ENCODE measurements at regions of chr2 and their contacts with region 1.

Region 1: DNA sequence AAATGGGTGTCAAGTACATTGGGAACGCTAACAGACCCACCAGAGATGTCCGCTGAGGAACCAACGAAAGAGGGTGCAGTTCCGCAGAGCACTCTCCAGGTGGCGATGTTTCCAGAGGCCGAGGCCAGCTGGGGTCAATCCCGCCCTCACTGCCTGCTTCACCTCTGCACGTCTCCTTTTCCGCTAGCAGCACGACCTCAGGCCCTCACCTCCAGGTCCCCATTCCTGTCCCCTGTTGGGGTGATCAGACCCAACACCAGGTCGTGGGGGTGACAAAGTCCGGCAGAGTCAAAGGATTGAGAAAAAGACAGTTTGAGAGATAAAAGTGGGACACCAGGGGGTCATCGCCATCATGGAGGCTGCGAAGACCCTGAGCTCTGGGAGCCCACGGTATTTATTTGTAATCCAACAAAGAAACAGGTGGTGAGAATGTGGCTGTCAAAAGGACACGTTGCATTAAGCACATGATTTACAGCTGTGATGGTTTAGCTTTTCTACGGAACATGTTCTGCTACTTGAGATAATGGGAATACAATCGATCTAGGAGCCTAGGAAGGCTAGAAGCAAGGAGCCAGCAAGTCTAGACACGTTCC is 27.3 kb downstream of the ZAP70 start:
- DNase-seq: peak in 3 of 5 donors; percentile 28 to 56 (median 35)
- H3K4me3 ChIP-seq: no peak overlapping the region
- H3K4me3 Mint-ChIP-seq: peak overlapping the region in 3 of 7 donors; percentile 29 to 63 (median 62)
- H3K27ac ChIP-seq: peak overlapping the region; percentile 32
- H3K27ac Mint-ChIP-seq: peak overlapping the region; percentile 71 to 92 (median 82)
- H3K4me1 ChIP-seq: peaks cover 48% of the 10 kb centered on the region
- H3K4me1 Mint-ChIP-seq: peaks cover 62 to 76% (median 70%) of the 10 kb centered on the region in 3 donors
- H3K27me3 ChIP-seq: no peaks in the 10 kb centered on the region
- H3K27me3 Mint-ChIP-seq: peaks cover 0 to 3% of the 10 kb centered on the region in 2 donors

Region 2: GRCh38 chr2:97718051-97718882 is 22.4 kb before region 1 on chr2:
- CTCF ChIA-PET with region 1: interaction called, 301 read pairs
- POLR2A ChIA-PET with region 1: interaction called, 13 read pairs
- DNase-seq: peak; percentile 68 to 88 (median 78)
- H3K4me3 ChIP-seq: peak overlapping the region; percentile 91
- H3K4me3 Mint-ChIP-seq: peak overlapping the region; percentile 89 to 99 (median 93)
- H3K27ac ChIP-seq: peak overlapping the region; percentile 58
- H3K27ac Mint-ChIP-seq: peak overlapping the region; percentile 86 to 100 (median 98)
- H3K4me1 ChIP-seq: peaks cover 81% of the 10 kb centered on the region
- H3K4me1 Mint-ChIP-seq: peaks cover 79 to 93% (median 81%) of the 10 kb centered on the region in 3 donors
- H3K27me3 ChIP-seq: no peaks in the 10 kb centered on the region
- H3K27me3 Mint-ChIP-seq: peaks cover 0 to 4% of the 10 kb centered on the region in 2 donors

Region 3: GRCh38 chr2:97728091-97728731 is 12.5 kb before region 1 on chr2:
- CTCF ChIA-PET with region 1: interaction called, 20 read pairs
- POLR2A ChIA-PET with region 1: interaction called, 3 read pairs
- DNase-seq: no peak
- H3K4me3 ChIP-seq: no peak overlapping the region
- H3K4me3 Mint-ChIP-seq: peak overlapping the region; percentile 5 to 61 (median 49)
- H3K27ac ChIP-seq: no peak overlapping the region
- H3K27ac Mint-ChIP-seq: peak overlapping the region; percentile 76 to 96 (median 88)
- H3K4me1 ChIP-seq: peaks cover 51% of the 10 kb centered on the region
- H3K4me1 Mint-ChIP-seq: peaks cover 71 to 93% (median 76%) of the 10 kb centered on the region in 3 donors
- H3K27me3 ChIP-seq: no peaks in the 10 kb centered on the region
- H3K27me3 Mint-ChIP-seq: no peaks in the 10 kb centered on the region

Region 4: GRCh38 chr2:97751752-97752151 is 11.1 kb after region 1 on chr2:
- CTCF ChIA-PET with region 1: interaction called, 10 read pairs
- POLR2A ChIA-PET with region 1: interaction called, 3 read pairs
- DNase-seq: peak in 1 of 5 donors; percentile 1
- H3K4me3 ChIP-seq: no peak overlapping the region
- H3K4me3 Mint-ChIP-seq: no peak overlapping the region
- H3K27ac ChIP-seq: no peak overlapping the region
- H3K27ac Mint-ChIP-seq: peak overlapping the region in 2 of 8 donors; percentile 8 to 20
- H3K4me1 ChIP-seq: peaks cover 20% of the 10 kb centered on the region
- H3K4me1 Mint-ChIP-seq: peaks cover 16 to 19% (median 18%) of the 10 kb centered on the region in 3 donors
- H3K27me3 ChIP-seq: no peaks in the 10 kb centered on the region
- H3K27me3 Mint-ChIP-seq: no peaks in the 10 kb centered on the region

Region 5: DNA sequence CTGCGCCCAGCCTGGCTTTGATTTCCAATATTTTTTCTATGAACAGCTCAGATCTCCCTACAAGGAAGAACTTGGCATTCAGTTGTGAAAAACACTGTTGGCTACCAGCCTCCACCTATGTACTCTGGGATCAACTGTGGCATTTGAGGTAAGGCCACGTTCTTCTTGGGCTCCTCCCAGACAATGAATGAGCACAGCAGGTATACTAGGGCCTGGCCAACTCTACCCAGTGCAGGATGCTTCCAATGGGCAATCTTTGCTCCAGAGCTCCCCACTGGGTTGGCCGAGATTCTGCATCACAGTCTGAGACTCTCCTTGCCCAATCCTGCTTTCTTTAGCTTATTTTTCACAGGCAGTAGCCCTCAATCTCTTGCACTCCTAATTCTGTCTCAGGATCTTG is 179.2 kb after region 1 on chr2:
- CTCF ChIA-PET with region 1: no interaction called
- POLR2A ChIA-PET with region 1: no interaction called
- DNase-seq: no peak
- H3K4me3 ChIP-seq: no peak overlapping the region
- H3K4me3 Mint-ChIP-seq: no peak overlapping the region
- H3K27ac ChIP-seq: no peak overlapping the region
- H3K27ac Mint-ChIP-seq: no peak overlapping the region
- H3K4me1 ChIP-seq: no peaks in the 10 kb centered on the region
- H3K4me1 Mint-ChIP-seq: peaks cover 21 to 40% (median 26%) of the 10 kb centered on the region in 3 donors
- H3K27me3 ChIP-seq: no peaks in the 10 kb centered on the region
- H3K27me3 Mint-ChIP-seq: no peaks in the 10 kb centered on the region

Measured in CD8-positive, alpha-beta memory T cell (primary cell).